ENCODE measurements at regions of chr3 and their contacts with region 1.

Region 1: DNA sequence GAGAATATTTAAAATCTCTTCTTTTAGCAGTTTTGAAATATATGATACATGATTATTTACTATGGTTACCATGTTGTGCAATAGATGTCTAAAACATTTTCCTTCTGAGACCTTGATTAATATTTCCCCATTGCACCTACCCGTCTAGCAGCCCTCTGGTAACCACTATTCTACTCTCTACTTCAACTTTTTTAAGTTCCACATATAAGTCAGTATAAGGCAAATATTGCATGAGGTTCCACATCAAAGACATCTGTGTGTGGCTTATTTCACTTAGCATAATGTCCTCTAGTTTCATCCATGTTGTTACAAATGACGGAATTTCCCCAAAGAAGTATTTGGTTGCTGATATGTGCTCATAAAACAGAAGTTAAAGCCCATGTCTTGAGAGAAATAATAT is 29.6 kb upstream of the NFKBIZ start:
- DNase-seq: no peak
- ATAC-seq: peak; percentile 93
- H3K4me3 ChIP-seq: no peak overlapping the region
- H3K27ac ChIP-seq: no peak overlapping the region
- H3K4me1 ChIP-seq: peaks cover 24% of the 10 kb centered on the region
- H3K27me3 ChIP-seq: no peaks in the 10 kb centered on the region
- CTCF ChIP-seq: no peak
- EP300 ChIP-seq: peak in 1 of 2 experiments; percentile 47; a peak in 1 of 4 replicates
- POLR2A ChIP-seq: no peak
- RAD21 ChIP-seq: no peak

Region 2: DNA sequence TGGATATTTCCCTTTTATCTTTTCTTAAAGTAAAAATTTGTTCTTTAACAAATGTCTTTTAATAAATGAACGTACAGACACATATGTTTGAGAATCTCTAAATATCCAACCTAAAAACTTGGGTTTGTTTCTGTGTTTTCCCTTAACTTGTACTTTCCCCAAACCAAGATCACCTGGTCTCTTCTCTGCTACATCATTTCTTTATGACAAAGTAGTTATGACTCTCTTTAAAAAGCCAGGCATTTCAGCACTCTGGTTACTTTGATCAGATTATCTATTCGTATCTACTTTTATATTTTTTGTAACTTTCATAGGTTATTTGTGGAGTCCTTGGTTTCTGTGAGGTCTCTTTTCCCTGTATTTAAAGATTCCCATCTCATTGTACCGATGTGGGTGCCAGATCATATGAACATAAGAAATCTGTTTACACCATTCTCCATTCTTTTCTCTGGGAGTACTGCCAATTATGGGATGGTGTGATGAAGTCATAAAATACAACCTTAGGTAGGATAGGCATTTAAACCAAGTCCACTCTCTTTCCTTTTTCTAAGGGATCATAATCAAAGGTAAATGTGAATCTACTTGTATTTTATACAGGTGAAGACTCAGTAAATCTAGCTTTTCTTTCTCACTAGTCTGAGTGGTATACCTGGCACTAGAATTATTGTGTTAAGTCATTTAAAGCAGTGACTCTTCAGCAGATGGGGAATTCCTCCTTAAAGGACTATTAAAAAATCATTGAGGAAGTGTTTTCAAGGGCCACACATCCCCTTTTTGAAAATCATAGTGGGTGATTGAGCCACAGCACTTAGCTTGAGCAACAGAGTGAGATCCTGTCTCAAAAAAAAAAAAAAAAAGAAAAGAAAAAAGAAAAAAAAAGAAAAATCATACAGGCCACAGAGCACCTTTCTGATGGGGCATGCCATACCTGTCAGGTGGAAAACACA is 17.2 kb after region 1 on chr3:
- CTCF ChIA-PET with region 1: interaction called, 5 read pairs
- POLR2A ChIA-PET with region 1: interaction called, 8 read pairs
- RAD21 ChIA-PET with region 1: interaction called, 13 read pairs
- SMC1A ChIA-PET with region 1: interaction called, 63 read pairs
- in situ Hi-C with region 1: no loop called
- intact Hi-C with region 1: no loop called
- DNase-seq: no peak
- ATAC-seq: peak; percentile 35
- H3K4me3 ChIP-seq: peak overlapping the region; percentile 32; the same call in 1 of the 2 replicates
- H3K27ac ChIP-seq: 0 out of 2 replicates have a peak overlapping the region, but pooled peaks have one; percentile 27
- H3K4me1 ChIP-seq: peaks cover 40% of the 10 kb centered on the region
- H3K27me3 ChIP-seq: no peaks in the 10 kb centered on the region
- CTCF ChIP-seq: no peak
- EP300 ChIP-seq: peak in 1 of 2 experiments; percentile 19; a peak in 1 of 4 replicates
- POLR2A ChIP-seq: no peak
- RAD21 ChIP-seq: no peak

Region 3: GRCh38 chr3:101842245-101842934 is 22.6 kb after region 1 on chr3:
- CTCF ChIA-PET with region 1: interaction called, 5 read pairs
- POLR2A ChIA-PET with region 1: interaction called, 8 read pairs
- RAD21 ChIA-PET with region 1: interaction called, 13 read pairs
- SMC1A ChIA-PET with region 1: interaction called, 23 read pairs
- in situ Hi-C with region 1: no loop called
- intact Hi-C with region 1: no loop called
- DNase-seq: no peak
- ATAC-seq: peak; percentile 15
- H3K4me3 ChIP-seq: no peak overlapping the region
- H3K27ac ChIP-seq: peak overlapping the region; percentile 22
- H3K4me1 ChIP-seq: peaks cover 27% of the 10 kb centered on the region
- H3K27me3 ChIP-seq: no peaks in the 10 kb centered on the region
- CTCF ChIP-seq: no peak
- EP300 ChIP-seq: no peak
- POLR2A ChIP-seq: no peak
- RAD21 ChIP-seq: no peak